Transverse colon (tissue), 4 donors: ENCODE measurements at regions of chrX and their contacts with region 1.

Region 1: DNA sequence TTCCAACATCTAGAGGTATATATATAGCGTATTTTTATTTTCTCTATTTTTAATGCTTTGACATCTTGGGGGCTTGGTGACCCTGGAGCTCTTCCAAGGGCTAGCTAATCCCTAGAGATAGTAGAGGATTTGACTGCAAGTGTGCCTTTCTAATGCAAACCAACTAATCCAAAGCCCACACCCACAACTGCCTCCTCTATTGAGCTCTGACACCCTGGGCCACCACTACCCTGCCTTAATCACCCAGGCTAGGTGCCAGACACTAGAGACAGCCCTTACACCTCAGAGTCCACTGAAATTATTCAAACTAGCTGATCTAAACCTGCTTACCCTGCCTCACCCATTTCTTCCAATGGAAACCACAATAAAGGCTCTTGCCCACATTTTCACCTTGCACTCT is 69.6 kb upstream of the ATXN3L start:
- DNase-seq: no peak
- H3K4me3 ChIP-seq: no peak overlapping the region
- H3K27ac ChIP-seq: no peak overlapping the region
- H3K4me1 ChIP-seq: no peaks in the 10 kb centered on the region
- H3K27me3 ChIP-seq: no peaks in the 10 kb centered on the region
- CTCF ChIP-seq: no peak
- EP300 ChIP-seq: no peak
- POLR2A ChIP-seq: no peak

Region 2: GRCh38 chrX:13341491-13342101 is 47.9 kb before region 1 on chrX:
- in situ Hi-C with region 1: no loop called
- intact Hi-C with region 1: loop called (anchors 1 kb)
- DNase-seq: no peak
- H3K4me3 ChIP-seq: no peak overlapping the region
- H3K27ac ChIP-seq: no peak overlapping the region
- H3K4me1 ChIP-seq: peaks cover 0 to 4% (median 0%) of the 10 kb centered on the region in 4 donors
- H3K27me3 ChIP-seq: no peaks in the 10 kb centered on the region
- CTCF ChIP-seq: no peak
- EP300 ChIP-seq: no peak
- POLR2A ChIP-seq: no peak